ENCODE measurements at regions of chr5 and their contacts with region 1.

Region 1: DNA sequence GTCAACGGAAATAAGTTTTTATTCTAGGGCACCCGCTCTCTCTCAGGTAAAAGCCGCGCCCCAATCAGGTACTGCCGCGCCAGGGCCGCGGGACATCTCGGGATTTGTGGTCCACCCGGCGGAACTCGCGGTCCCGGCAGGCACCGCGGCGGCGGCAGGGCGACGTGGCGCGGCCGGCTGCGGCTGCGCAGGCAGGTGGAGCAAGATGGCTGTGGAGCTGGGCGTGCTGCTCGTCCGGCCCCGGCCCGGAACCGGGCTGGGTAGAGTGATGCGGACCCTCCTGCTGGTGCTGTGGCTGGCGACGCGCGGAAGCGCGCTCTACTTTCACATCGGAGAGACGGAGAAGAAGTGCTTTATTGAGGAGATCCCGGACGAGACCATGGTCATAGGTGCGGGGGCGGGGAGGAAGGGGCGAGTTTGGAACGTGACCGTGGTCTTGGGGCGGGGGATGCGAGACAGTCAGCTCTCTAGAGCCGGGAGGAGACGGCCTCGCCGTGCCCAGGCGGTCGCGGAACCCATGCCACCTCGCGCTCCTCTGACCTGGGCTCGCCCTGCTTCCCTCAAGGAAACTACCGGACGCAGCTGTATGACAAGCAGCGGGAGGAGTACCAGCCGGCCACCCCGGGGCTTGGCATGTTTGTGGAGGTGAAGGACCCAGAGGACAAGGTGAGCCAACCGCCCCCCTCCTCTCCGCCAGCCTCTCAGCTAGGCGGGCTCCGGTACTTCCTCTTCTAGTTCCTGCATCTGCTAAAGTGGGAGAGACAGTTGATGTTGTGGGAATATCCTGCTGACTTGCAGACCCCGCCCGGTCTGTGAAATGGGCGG is at the start of gene TMED9:
- DNase-seq: peak; percentile 90
- H3K4me3 Mint-ChIP-seq: peak within 1 kb of the TSS; percentile 99
- H3K27ac Mint-ChIP-seq: peak within 1 kb of the TSS; percentile 100
- H3K4me1 Mint-ChIP-seq: peaks cover 29% of the 10 kb centered on the region
- H3K27me3 Mint-ChIP-seq: peaks cover 20% of the 10 kb centered on the region
- total RNA-seq, gene TMED9: 174 and 175 TPM in 2 replicates

Region 2: DNA sequence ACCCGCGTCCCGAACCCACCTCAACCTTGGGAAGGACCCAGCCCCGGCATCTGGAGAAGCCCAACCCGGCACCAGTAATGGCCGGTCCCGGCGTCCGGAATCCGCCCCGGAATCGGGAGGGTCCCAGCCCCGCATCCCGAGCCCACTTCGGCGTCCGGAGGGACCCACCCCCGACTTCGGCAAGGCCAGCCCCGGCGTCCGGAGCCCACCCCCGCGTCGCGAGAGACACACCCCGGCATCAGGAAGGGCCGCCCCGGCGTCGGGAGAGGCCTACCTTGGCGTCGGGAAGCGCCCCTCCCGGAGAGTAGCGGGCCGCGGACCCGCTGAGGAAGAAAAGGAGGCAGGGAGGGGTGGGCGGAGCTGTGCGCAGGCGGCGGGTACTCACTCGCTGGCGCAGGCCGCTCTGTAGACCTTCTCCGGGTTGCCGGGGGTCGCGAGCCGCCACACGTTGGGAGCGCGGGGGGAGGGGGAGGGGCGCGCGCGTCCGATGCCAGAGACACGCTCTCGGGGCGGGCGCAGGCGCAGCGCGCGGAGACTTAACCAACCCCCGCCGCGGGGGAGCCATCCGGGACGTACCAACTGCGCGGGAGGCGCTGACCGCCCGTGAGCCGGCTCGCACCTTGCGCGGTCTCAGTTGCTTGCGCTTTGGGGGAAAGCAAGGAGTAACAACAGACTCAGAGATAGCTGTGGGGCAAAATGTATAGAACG is 585.8 kb before region 1 on chr5 and contains the start of gene UIMC1:
- intact Hi-C with region 1: loop called (anchors 10 kb)
- DNase-seq: peak; percentile 91
- H3K4me3 Mint-ChIP-seq: peak within 1 kb of the TSS; percentile 96
- H3K27ac Mint-ChIP-seq: peak within 1 kb of the TSS; percentile 95
- H3K4me1 Mint-ChIP-seq: peaks cover 22% of the 10 kb centered on the region
- H3K27me3 Mint-ChIP-seq: no peaks in the 10 kb centered on the region
- total RNA-seq, gene UIMC1: 57.0 and 70.6 TPM in 2 replicates

Region 3: DNA sequence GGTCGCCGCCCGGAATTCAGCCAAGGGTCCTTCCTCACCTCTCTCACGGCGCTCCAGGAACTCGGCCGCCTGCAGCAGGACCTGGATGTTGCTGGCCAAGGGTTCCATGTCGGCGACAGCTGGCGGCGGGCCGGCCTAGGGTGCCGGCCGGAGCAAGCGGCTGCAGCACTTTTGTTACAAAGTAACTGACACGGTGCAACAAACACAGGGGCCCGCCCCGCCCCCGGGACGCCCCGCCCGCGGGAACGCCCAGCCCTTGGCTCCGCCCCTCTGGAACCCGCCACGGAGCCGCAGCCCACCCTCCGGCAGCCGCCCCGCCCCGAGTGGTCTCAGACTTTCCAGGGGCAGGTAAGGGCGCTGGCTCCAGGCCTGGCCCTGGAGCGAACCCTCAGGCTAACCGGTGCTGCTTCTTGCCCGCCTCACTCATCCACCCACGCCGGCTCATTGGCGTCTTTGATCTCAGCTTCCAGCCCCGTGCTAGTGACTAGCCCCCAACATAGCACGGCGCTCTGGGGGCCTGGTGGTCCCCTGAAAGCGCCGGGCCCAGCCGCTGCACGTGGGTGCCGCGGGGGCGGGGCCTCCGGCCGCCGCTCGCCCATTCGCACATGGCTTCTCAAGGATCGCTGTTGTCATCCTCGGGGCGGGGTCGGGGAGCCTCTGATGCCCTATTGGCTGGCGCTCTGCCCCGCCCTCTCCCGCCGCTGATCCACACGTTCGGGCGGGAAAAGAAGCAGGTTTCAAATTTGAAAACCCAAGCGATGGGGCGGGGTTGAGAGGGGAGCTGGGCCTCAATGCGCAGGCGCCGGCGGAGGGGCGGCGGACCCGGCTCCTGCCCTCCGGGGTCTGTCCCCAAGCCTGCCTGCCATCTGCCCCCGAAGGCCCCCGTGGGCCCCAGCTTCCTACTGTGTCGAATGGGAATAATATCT is 280.2 kb before region 1 on chr5 and contains the start of gene MXD3:
- intact Hi-C with region 1: loop called (anchors 1 kb)
- DNase-seq: peak; percentile 96
- H3K4me3 Mint-ChIP-seq: peak within 1 kb of the TSS; percentile 89
- H3K27ac Mint-ChIP-seq: peak within 1 kb of the TSS; percentile 85
- H3K4me1 Mint-ChIP-seq: peaks cover 44% of the 10 kb centered on the region
- H3K27me3 Mint-ChIP-seq: no peaks in the 10 kb centered on the region
- total RNA-seq, gene MXD3: 9.6 and 11.8 TPM in 2 replicates

Region 4: GRCh38 chr5:177425801-177426565 is 166.2 kb before region 1 on chr5:
- intact Hi-C with region 1: loop called (anchors 5 kb)
- DNase-seq: peak; percentile 99
- H3K4me3 Mint-ChIP-seq: peak overlapping the region; percentile 86
- H3K27ac Mint-ChIP-seq: peak overlapping the region; percentile 94
- H3K4me1 Mint-ChIP-seq: peaks cover 51% of the 10 kb centered on the region
- H3K27me3 Mint-ChIP-seq: no peaks in the 10 kb centered on the region

Region 5: GRCh38 chr5:177516604-177517568 is 75.3 kb before region 1 on chr5 and contains the start of gene DDX41:
- intact Hi-C with region 1: loop called (anchors 2 kb)
- DNase-seq: peak; percentile 96
- H3K4me3 Mint-ChIP-seq: peak within 1 kb of the TSS; percentile 91
- H3K27ac Mint-ChIP-seq: peak within 1 kb of the TSS; percentile 88
- H3K4me1 Mint-ChIP-seq: peaks cover 46% of the 10 kb centered on the region
- H3K27me3 Mint-ChIP-seq: no peaks in the 10 kb centered on the region
- total RNA-seq, gene DDX41: 151 and 166 TPM in 2 replicates

Region 6: GRCh38 chr5:178153573-178154343 is 561.5 kb after region 1 on chr5 and contains the start of gene NHP2:
- intact Hi-C with region 1: loop called (anchors 5 kb)
- DNase-seq: peak; percentile 98
- H3K4me3 Mint-ChIP-seq: peak within 1 kb of the TSS; percentile 97
- H3K27ac Mint-ChIP-seq: peak within 1 kb of the TSS; percentile 86
- H3K4me1 Mint-ChIP-seq: peaks cover 54% of the 10 kb centered on the region
- H3K27me3 Mint-ChIP-seq: no peaks in the 10 kb centered on the region
- total RNA-seq, gene NHP2: 264 and 265 TPM in 2 replicates